Activated CD4-positive, alpha-beta memory T cell treated with anti-CD3 and anti-CD28 coated beads, Interleukin-2, amount 10 ng/mL, durations not matched to agents 7 days and 5 days (primary cell): ENCODE measurements at regions of chr6 and their contacts with region 1.

Region 1: GRCh38 chr6:27864906-27865849 is 47.0 kb downstream of the OR2B2 start:
- DNase-seq: peak; percentile 85
- H3K4me3 Mint-ChIP-seq: peak overlapping the region; percentile 81
- H3K27ac Mint-ChIP-seq: peak overlapping the region; percentile 99
- H3K4me1 Mint-ChIP-seq: peaks cover 61% of the 10 kb centered on the region
- H3K27me3 Mint-ChIP-seq: peaks cover 4% of the 10 kb centered on the region

Region 2: DNA sequence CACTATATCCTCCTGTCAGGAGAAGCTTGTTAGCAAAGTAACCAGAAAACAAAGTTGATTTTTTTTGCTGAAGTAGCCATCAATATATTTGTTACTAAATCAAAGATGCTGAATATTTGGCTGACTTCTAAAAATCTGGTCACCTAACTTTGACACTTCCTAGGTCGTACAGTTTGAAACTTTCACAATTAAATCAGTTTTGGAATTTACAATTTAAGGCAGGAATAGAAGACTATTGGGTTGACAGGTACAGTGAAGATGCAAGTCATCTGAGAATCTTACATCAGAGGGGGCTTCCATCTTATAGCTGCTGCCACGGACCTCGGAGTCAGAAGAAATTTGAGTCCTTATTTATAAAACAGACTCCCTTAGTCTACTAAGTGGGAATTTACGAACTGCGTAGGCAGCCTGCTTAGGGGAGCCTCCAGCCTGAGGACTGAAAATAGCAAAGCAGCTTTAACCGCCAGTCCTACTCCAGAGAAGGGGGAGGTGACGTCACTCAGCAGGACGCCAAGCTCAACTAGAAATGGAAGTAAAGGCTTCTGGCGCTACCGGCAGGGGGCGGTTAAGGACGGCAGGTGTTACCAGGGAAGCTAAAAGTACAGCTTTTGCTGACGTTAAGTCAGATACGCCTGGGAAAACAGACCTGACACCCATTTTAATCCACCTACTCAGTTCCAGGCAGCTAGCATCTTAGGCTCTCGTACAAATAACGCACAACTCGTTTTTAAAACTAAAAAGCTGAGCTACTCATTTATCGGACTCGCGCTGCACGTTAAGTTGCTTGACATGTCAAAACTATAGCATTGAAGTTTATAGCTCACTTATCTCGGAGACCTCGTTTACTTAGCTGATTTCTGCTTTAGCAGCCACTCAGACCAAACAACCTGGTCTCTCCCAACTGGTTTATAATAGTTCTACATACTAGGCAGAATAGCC is 1839.0 kb before region 1 on chr6:
- CTCF ChIA-PET with region 1: no interaction called
- POLR2A ChIA-PET with region 1: interaction called, 205 read pairs
- DNase-seq: peak; percentile 94
- H3K4me3 Mint-ChIP-seq: peak overlapping the region; percentile 75
- H3K27ac Mint-ChIP-seq: peak overlapping the region; percentile 100
- H3K4me1 Mint-ChIP-seq: peaks cover 84% of the 10 kb centered on the region
- H3K27me3 Mint-ChIP-seq: peaks cover 2% of the 10 kb centered on the region

Region 3: DNA sequence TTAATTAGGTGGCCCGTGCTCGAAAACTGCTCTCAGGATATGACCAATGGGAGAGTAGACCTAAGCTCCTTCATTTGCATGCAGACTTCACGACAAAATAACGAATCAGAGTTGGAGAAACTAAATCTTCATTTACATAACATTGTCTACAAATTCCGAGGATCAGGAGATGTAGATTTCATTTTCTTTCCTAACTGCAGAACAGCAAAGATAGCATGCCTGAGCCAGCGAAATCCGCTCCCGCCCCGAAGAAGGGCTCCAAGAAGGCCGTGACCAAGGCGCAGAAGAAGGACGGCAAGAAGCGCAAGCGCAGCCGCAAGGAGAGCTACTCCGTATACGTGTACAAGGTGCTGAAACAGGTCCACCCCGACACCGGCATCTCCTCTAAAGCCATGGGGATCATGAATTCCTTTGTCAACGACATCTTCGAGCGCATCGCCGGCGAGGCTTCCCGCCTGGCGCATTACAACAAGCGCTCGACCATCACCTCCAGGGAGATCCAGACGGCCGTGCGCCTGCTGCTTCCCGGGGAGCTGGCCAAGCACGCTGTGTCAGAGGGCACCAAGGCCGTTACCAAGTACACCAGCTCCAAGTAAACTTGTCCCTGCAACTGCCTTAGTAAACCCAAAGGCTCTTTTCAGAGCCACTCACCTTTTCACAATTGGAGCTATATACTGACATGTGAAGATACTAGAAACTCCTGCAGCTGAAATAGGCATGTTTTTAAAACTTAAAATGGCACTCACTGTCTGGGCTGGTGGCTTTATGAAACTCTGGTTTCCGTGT is 1681.4 kb before region 1 on chr6:
- CTCF ChIA-PET with region 1: no interaction called
- POLR2A ChIA-PET with region 1: interaction called, 13 read pairs
- DNase-seq: peak; percentile 78
- H3K4me3 Mint-ChIP-seq: peak overlapping the region; percentile 75
- H3K27ac Mint-ChIP-seq: peak overlapping the region; percentile 92
- H3K4me1 Mint-ChIP-seq: peaks cover 71% of the 10 kb centered on the region
- H3K27me3 Mint-ChIP-seq: no peaks in the 10 kb centered on the region

Region 4: DNA sequence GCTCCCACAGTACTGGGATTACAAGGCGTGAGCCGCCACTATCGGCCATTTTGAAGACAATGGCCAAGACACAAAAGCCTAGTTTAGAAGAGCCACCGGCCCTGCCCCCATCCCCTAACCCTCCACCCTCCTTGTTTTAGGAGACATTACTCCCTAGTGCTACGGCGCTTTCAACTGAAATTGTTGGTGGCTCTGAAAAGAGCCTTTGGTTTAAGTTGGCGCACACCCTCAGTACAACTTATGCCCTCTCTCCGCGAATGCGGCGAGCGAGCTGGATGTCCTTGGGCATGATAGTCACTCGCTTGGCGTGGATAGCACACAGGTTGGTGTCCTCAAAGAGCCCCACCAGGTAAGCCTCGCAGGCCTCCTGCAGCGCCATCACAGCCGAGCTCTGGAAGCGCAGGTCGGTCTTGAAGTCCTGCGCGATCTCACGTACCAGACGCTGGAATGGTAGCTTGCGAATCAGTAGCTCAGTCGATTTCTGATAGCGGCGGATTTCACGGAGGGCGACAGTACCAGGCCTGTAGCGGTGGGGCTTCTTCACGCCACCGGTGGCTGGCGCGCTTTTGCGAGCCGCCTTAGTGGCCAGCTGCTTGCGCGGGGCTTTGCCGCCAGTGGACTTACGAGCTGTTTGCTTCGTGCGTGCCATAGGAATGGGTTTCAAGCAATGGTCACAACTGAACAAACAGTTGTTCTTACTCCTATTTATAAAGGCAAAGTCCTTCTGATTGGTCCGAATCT is 1615.1 kb before region 1 on chr6:
- CTCF ChIA-PET with region 1: no interaction called
- POLR2A ChIA-PET with region 1: interaction called, 34 read pairs
- DNase-seq: peak; percentile 84
- H3K4me3 Mint-ChIP-seq: peak overlapping the region; percentile 90
- H3K27ac Mint-ChIP-seq: peak overlapping the region; percentile 93
- H3K4me1 Mint-ChIP-seq: peaks cover 42% of the 10 kb centered on the region
- H3K27me3 Mint-ChIP-seq: no peaks in the 10 kb centered on the region

Region 5: GRCh38 chr6:27146706-27147505 is 718.3 kb before region 1 on chr6:
- CTCF ChIA-PET with region 1: interaction called, 4 read pairs
- POLR2A ChIA-PET with region 1: interaction called, 157 read pairs
- DNase-seq: peak; percentile 87
- H3K4me3 Mint-ChIP-seq: no peak overlapping the region
- H3K27ac Mint-ChIP-seq: no peak overlapping the region
- H3K4me1 Mint-ChIP-seq: peaks cover 31% of the 10 kb centered on the region
- H3K27me3 Mint-ChIP-seq: no peaks in the 10 kb centered on the region

Region 6: DNA sequence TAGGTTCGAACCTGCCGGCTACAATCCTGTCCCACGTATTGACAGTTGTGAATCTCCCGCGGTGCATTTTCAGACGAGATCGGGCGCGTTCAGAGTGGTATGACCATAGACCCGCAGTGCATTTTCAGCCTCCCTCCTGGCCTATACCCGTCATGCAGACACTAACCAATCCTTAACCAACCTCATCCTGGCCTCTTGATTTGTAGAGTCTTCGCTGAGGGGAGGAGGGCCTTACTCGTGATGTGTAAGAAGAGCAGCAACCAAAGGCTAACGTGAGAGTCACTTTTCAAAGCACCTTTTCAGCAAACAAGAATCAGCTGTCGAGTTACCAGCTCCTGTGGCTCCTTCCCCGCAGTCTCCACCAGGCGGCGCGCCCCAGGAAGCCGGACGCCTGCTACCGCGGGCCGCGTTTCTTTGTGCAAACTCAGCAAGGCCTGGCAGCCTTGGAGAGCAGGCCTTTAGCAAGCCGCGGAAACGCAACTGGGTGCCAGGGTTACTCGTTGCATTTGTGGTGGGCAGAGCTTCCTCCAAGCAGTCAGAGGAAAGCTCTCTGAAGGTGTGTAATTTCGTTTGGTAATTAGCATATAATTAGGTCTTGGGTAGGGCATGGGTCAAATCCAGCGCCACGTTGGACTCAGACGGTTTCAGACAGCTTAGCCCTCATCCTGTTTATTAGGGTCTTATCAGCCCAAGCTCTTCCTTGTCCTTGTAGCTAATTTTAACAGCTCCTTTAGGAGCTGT is 92.7 kb before region 1 on chr6:
- CTCF ChIA-PET with region 1: interaction called, 3 read pairs
- POLR2A ChIA-PET with region 1: interaction called, 10 read pairs
- DNase-seq: peak; percentile 94
- H3K4me3 Mint-ChIP-seq: peak overlapping the region; percentile 6
- H3K27ac Mint-ChIP-seq: peak overlapping the region; percentile 46
- H3K4me1 Mint-ChIP-seq: peaks cover 22% of the 10 kb centered on the region
- H3K27me3 Mint-ChIP-seq: peaks cover 19% of the 10 kb centered on the region

Region 7: DNA sequence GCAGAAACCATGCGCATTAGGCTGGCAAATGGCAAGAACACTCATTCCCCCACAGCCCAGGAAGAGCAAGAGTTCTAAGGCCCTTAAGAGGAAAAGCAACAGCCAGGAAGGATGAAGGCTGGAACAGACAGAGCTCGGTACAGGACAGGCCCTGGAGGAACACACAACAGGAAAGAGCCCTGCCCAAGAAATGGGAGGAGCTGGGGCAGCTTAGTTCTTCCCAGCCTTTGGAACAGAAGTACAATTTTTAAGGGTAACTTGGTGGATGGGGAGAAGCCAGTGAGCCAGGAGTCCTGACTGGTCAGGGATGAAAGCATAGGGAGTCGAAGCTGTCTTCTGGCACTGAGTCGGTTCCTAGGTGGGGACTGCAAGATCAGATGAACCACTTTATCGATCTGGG is 14.7 kb after region 1 on chr6:
- CTCF ChIA-PET with region 1: no interaction called
- POLR2A ChIA-PET with region 1: interaction called, 1,034 read pairs
- DNase-seq: no peak
- H3K4me3 Mint-ChIP-seq: no peak overlapping the region
- H3K27ac Mint-ChIP-seq: peak overlapping the region; percentile 21
- H3K4me1 Mint-ChIP-seq: peaks cover 8% of the 10 kb centered on the region
- H3K27me3 Mint-ChIP-seq: no peaks in the 10 kb centered on the region

Region 8: GRCh38 chr6:28011722-28012121 is 146.5 kb after region 1 on chr6:
- CTCF ChIA-PET with region 1: no interaction called
- POLR2A ChIA-PET with region 1: no interaction called
- DNase-seq: no peak
- H3K4me3 Mint-ChIP-seq: no peak overlapping the region
- H3K27ac Mint-ChIP-seq: no peak overlapping the region
- H3K4me1 Mint-ChIP-seq: peaks cover 3% of the 10 kb centered on the region
- H3K27me3 Mint-ChIP-seq: peaks cover 12% of the 10 kb centered on the region